ENCODE measurements at regions of chr10 and their contacts with region 1.

Region 1: DNA sequence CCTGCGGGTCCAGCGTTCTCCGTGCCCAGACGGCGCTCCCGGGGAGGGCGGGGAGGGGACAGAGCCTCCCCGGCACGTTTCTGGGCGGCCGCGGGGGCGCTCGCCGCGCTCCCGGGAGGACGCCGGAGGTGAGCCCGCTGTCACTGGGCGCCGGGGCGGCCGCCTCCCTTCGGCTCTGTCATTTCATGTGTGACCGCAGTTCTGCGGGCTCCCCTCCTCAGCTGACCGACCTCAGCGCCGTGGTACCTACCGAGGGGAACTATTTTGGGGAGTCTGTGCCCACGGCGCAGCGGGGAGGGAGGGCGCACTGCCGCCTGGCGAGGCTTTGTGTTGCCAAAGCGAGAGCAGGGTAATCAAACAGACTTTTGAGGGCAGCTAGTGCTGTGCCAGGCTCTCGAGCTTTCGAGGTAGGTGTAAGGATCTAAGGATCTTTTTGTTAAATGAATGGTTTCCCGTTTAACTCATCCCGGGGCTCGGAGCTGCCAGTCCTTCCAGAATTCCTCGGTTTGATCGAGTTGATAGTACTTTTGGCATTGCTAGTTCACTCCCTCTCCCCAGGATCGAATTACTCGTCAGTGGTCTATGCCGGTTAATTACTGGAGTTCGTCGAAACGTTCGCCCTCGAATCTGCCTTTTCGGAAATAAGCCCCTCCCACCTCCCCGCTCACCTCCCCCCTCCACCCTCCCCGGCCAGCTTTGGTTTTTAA is 1.9 kb downstream of the ARID5B start:
- DNase-seq: peak in 9 of 10 donors; percentile 30 to 72 (median 51)
- H3K4me3 ChIP-seq: peak overlapping the region; percentile 54 to 98 (median 85)
- H3K27ac ChIP-seq: peak overlapping the region; percentile 74 to 99 (median 95)
- H3K27me3 ChIP-seq: no peaks in the 10 kb centered on the region
- CTCF ChIP-seq: peak in 47 of 56 donors; percentile 18 to 64 (median 44)

Region 2: GRCh38 chr10:61774031-61774430 is 129.3 kb before region 1 on chr10:
- intact Hi-C with region 1: no loop called
- DNase-seq: no peak
- H3K4me3 ChIP-seq: no peak overlapping the region
- H3K27ac ChIP-seq: no peak overlapping the region
- H3K27me3 ChIP-seq: no peaks in the 10 kb centered on the region
- CTCF ChIP-seq: no peak

Region 3: GRCh38 chr10:61974601-61975390 is 71.4 kb after region 1 on chr10:
- intact Hi-C with region 1: loop called (anchors 5 kb)
- DNase-seq: peak in 5 of 10 donors; percentile 5 to 77 (median 47)
- H3K4me3 ChIP-seq: peak overlapping the region in 32 of 59 donors; percentile 0 to 45 (median 17)
- H3K27ac ChIP-seq: peak overlapping the region in 53 of 59 donors; percentile 5 to 87 (median 67)
- H3K27me3 ChIP-seq: no peaks in the 10 kb centered on the region
- CTCF ChIP-seq: peak in 1 of 56 donors; percentile 4

Region 4: GRCh38 chr10:62038609-62039190 is 135.3 kb after region 1 on chr10:
- intact Hi-C with region 1: loop called in 1 of 2 experiments (anchors 5 kb)
- DNase-seq: peak in 9 of 10 donors; percentile 34 to 78 (median 69)
- H3K4me3 ChIP-seq: peak overlapping the region in 46 of 59 donors; percentile 8 to 60 (median 34)
- H3K27ac ChIP-seq: peak overlapping the region in 21 of 59 donors; percentile 3 to 68 (median 32)
- H3K27me3 ChIP-seq: no peaks in the 10 kb centered on the region
- CTCF ChIP-seq: peak; percentile 54 to 98 (median 87)

Region 5: GRCh38 chr10:62050893-62051433 is 147.6 kb after region 1 on chr10:
- intact Hi-C with region 1: loop called in 1 of 2 experiments (anchors 2 kb)
- DNase-seq: peak in 3 of 10 donors; percentile 42 to 64 (median 52)
- H3K4me3 ChIP-seq: peak overlapping the region; percentile 44 to 88 (median 70)
- H3K27ac ChIP-seq: peak overlapping the region in 56 of 59 donors; percentile 67 to 99 (median 96)
- H3K27me3 ChIP-seq: no peaks in the 10 kb centered on the region
- CTCF ChIP-seq: peak in 1 of 56 donors; percentile 15

Region 6: DNA sequence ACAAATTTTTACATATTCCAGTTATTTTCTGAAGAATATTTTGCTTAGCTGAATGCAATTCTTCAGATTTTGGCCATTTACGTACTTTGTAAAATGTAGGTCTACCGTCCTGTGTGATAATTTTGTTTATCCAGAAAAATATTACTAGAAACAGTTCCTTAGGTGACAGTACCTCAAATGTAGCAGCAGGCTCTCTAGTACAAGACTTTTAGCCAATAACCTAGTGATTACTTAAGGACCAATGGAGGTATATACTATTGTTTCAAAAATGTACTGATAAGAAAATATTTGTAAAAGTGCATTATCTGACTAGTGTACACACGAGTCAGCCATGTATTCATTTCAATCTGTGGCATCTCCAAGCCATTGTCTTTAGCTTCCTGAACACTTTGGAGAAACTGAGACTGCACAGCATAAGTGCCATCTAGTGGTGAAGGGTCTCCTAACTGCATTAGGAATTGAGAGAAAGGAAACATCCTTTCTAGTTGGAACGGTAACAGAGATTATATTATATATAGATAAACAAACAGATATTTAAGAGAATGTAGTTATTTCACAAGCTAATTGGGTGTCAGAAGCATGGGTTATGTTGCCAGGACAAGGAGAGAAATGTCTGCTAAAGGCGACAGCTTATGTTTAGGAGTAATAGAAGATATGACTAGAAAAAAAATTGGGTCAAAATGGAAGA is 341.6 kb after region 1 on chr10:
- intact Hi-C with region 1: loop called (anchors 5 kb)
- DNase-seq: peak in 4 of 10 donors; percentile 11 to 57 (median 22)
- H3K4me3 ChIP-seq: peak overlapping the region in 12 of 59 donors; percentile 3 to 29 (median 8)
- H3K27ac ChIP-seq: peak overlapping the region in 4 of 59 donors; percentile 6 to 39 (median 28)
- H3K27me3 ChIP-seq: no peaks in the 10 kb centered on the region
- CTCF ChIP-seq: peak; percentile 74 to 99 (median 93)

Measured in dorsolateral prefrontal cortex (tissue), 120 donors.